ENCODE measurements at regions of chr7 and their contacts with region 1.

Region 1: GRCh38 chr7:31782411-31782991 is 95.5 kb downstream of the PPP1R17 start:
- DNase-seq: peak; percentile 20
- ATAC-seq: peak; percentile 96
- H3K4me3 ChIP-seq: no peak overlapping the region
- H3K27ac ChIP-seq: no peak overlapping the region
- H3K4me1 ChIP-seq: no peaks in the 10 kb centered on the region
- H3K27me3 ChIP-seq: no peaks in the 10 kb centered on the region
- CTCF ChIP-seq: peak; percentile 67 to 80 (median 79)
- EP300 ChIP-seq: no peak
- POLR2A ChIP-seq: no peak
- RAD21 ChIP-seq: peak; percentile 60

Region 2: DNA sequence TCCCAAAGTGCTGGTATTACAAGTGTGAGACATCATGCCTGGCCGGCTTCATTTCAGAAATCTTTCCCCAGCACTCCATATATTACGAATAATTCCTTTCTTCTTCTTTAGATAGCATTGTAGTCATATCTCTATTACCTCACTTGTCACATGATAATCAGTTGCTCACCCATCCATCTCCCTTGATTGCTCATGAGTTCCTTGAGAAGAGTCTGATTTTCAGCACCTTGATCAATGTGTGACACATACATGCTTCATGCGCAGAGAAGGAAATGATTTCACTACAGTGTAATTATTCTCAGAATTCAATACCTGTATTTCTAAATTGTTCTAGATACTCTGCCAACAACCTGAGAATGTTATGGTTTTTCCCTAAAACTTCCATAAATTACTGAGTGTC is 1251.2 kb before region 1 on chr7:
- CTCF ChIA-PET with region 1: no interaction called
- POLR2A ChIA-PET with region 1: no interaction called
- RAD21 ChIA-PET with region 1: no interaction called
- SMC1A ChIA-PET with region 1: no interaction called
- in situ Hi-C with region 1: no loop called
- intact Hi-C with region 1: no loop called
- DNase-seq: no peak
- ATAC-seq: no peak
- H3K4me3 ChIP-seq: no peak overlapping the region
- H3K27ac ChIP-seq: no peak overlapping the region
- H3K4me1 ChIP-seq: no peaks in the 10 kb centered on the region
- H3K27me3 ChIP-seq: no peaks in the 10 kb centered on the region
- CTCF ChIP-seq: no peak
- EP300 ChIP-seq: no peak
- POLR2A ChIP-seq: no peak
- RAD21 ChIP-seq: no peak

Region 3: GRCh38 chr7:31892099-31892829 is 109.8 kb after region 1 on chr7:
- CTCF ChIA-PET with region 1: interaction called, 17 read pairs
- POLR2A ChIA-PET with region 1: no interaction called
- RAD21 ChIA-PET with region 1: interaction called, 4 read pairs
- SMC1A ChIA-PET with region 1: interaction called, 11 read pairs
- in situ Hi-C with region 1: no loop called
- intact Hi-C with region 1: loop called (anchors 1 kb)
- DNase-seq: peak; percentile 90
- ATAC-seq: peak; percentile 93
- H3K4me3 ChIP-seq: no peak overlapping the region
- H3K27ac ChIP-seq: peak overlapping the region; percentile 53; the same call in 1 of the 2 replicates
- H3K4me1 ChIP-seq: peaks cover 25% of the 10 kb centered on the region
- H3K27me3 ChIP-seq: no peaks in the 10 kb centered on the region; a peak in 1 of 4 replicates
- CTCF ChIP-seq: no peak
- EP300 ChIP-seq: peak in 1 of 2 experiments; percentile 63; a peak in 1 of 4 replicates
- POLR2A ChIP-seq: no peak
- RAD21 ChIP-seq: no peak

Region 4: DNA sequence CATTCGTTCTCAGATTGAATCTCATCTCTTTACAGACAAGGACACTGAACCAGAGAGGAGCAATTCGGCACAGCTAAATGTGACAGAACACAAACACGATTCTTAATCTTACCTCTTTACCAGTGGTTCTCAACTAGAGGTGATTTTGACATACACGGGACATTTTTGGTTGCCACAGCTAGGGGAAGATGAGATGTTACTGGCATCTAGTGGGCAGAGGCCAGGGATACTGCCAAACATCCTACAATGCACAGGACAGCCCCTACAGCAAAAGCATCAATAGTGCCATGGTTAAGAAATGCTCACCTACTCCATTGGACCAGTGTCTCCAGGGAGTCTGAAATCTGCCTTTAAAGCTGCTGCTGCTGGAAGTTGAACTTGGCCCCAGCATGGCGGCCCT is 260.4 kb after region 1 on chr7:
- CTCF ChIA-PET with region 1: interaction called, 18 read pairs
- POLR2A ChIA-PET with region 1: no interaction called
- RAD21 ChIA-PET with region 1: no interaction called
- SMC1A ChIA-PET with region 1: interaction called, 6 read pairs
- in situ Hi-C with region 1: no loop called
- intact Hi-C with region 1: no loop called
- DNase-seq: no peak
- ATAC-seq: peak; percentile 33
- H3K4me3 ChIP-seq: no peak overlapping the region
- H3K27ac ChIP-seq: no peak overlapping the region
- H3K4me1 ChIP-seq: no peaks in the 10 kb centered on the region
- H3K27me3 ChIP-seq: no peaks in the 10 kb centered on the region
- CTCF ChIP-seq: peak in 1 of 3 experiments; percentile 14; a peak in 1 of 6 replicates
- EP300 ChIP-seq: no peak
- POLR2A ChIP-seq: no peak
- RAD21 ChIP-seq: peak; percentile 21; the same call in 1 of the 2 replicates

Region 5: GRCh38 chr7:32062150-32062549 is 279.6 kb after region 1 on chr7:
- CTCF ChIA-PET with region 1: interaction called, 8 read pairs
- POLR2A ChIA-PET with region 1: no interaction called
- RAD21 ChIA-PET with region 1: interaction called, 3 read pairs
- SMC1A ChIA-PET with region 1: interaction called, 9 read pairs
- in situ Hi-C with region 1: no loop called
- intact Hi-C with region 1: loop called (anchors 5 kb)
- DNase-seq: no peak
- ATAC-seq: peak; percentile 74
- H3K4me3 ChIP-seq: no peak overlapping the region
- H3K27ac ChIP-seq: no peak overlapping the region
- H3K4me1 ChIP-seq: no peaks in the 10 kb centered on the region
- H3K27me3 ChIP-seq: no peaks in the 10 kb centered on the region; a peak in 1 of 4 replicates
- CTCF ChIP-seq: peak; percentile 41 to 66 (median 54)
- EP300 ChIP-seq: no peak
- POLR2A ChIP-seq: no peak
- RAD21 ChIP-seq: peak; percentile 47